ENCODE measurements at regions of chr7 and their contacts with region 1.

Region 1: DNA sequence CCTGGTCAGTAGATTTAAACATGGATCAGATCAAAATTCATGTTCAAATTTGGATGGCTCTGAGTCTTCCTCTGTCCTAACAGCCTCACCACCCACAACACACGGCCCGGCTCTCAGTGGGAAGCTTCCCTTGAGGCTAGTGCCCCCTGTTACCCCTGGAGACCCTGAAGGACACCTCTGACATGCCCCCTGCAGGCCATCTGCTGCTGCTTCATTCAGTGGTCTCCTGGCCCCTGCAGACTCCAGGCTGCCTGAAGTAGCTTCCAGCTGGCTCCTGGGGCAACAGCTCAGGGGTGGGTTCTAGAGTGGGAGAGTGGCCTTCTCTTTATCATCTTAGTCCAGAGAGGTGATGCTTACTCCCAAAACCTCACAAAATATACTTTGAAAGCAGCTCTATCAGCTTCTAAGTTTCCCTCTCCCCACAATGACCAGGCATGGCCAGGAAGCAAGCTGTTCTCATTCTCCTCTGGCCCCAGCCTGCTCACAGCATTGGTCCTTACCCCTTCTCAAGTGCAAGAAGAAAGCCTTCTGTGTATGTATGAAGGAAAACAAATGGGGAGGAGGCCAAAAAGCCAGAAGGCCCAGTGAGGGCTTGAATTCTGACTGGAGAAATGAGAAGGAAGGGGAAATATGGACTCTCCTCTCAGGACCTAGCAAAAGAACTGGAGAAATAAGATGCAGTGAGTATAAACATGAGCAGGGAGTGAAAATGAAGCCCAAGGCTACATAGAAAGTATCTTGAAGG is 189.6 kb upstream of the INHBA start:
- DNase-seq: peak in 1 of 2 donors; percentile 11
- ATAC-seq: peak in 1 of 3 donors; percentile 35
- H3K4me3 ChIP-seq: no peak overlapping the region
- H3K4me3 Mint-ChIP-seq: no peak overlapping the region
- H3K27ac ChIP-seq: no peak overlapping the region
- H3K27ac Mint-ChIP-seq: no peak overlapping the region
- H3K4me1 ChIP-seq: no peaks in the 10 kb centered on the region
- H3K4me1 Mint-ChIP-seq: no peaks in the 10 kb centered on the region
- H3K27me3 ChIP-seq: no peaks in the 10 kb centered on the region
- H3K27me3 Mint-ChIP-seq: peaks cover 3 to 18% of the 10 kb centered on the region in 2 donors
- CTCF ChIP-seq: no peak

Region 2: DNA sequence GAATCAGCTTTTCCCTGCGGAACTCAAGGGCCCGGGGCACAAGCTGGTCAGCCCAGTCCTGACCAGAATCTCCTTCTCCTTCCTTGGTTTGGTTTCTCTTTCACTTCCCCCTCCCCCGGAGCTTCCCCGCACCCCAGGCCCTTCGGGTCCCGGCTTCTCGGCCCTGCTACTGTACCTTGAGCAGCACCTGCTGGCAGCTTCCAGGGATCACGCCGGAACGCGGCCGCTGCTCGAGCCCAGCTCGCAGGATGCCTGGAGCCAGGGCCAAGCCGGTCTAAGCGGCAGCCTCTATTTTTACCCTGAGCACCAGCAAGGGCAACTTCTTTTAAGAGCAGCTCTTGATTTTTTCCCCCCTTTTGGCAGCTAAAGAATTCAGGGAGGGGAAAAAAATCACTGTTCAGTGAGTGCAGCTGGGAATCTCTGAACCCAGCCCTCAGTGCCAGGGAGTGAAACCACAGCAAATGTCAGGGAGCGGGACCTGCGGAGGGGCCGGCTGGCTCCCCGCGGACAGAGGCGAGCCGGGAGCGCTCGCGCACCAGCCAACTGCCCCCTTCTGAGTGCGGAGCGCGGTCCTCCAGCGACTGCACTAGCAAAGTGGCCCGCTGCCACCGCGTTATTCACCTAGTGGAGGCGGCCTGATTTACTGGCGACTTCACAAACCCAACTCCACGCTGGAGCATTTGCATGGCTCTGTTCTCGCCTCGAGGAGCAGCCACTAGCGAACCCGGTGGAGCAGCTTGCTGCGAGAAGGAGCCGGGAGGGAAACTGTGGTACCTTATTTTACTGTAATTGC is 187.2 kb before region 1 on chr7:
- intact Hi-C with region 1: loop called (anchors 10 kb)
- DNase-seq: peak; percentile 49 to 53
- ATAC-seq: peak; percentile 88 to 92 (median 89)
- H3K4me3 ChIP-seq: peak overlapping the region; percentile 58
- H3K4me3 Mint-ChIP-seq: peak overlapping the region; percentile 93
- H3K27ac ChIP-seq: no peak overlapping the region
- H3K27ac Mint-ChIP-seq: peak overlapping the region in 1 of 2 donors; percentile 90
- H3K4me1 ChIP-seq: peaks cover 12% of the 10 kb centered on the region
- H3K4me1 Mint-ChIP-seq: peaks cover 14 to 21% of the 10 kb centered on the region in 2 donors
- H3K27me3 ChIP-seq: no peaks in the 10 kb centered on the region
- H3K27me3 Mint-ChIP-seq: peaks cover 22 to 43% of the 10 kb centered on the region in 2 donors
- CTCF ChIP-seq: peak; percentile 42

Region 3: GRCh38 chr7:41745451-41745850 is 147.1 kb before region 1 on chr7:
- intact Hi-C with region 1: no loop called
- DNase-seq: no peak
- ATAC-seq: no peak
- H3K4me3 ChIP-seq: no peak overlapping the region
- H3K4me3 Mint-ChIP-seq: no peak overlapping the region
- H3K27ac ChIP-seq: no peak overlapping the region
- H3K27ac Mint-ChIP-seq: no peak overlapping the region
- H3K4me1 ChIP-seq: no peaks in the 10 kb centered on the region
- H3K4me1 Mint-ChIP-seq: no peaks in the 10 kb centered on the region
- H3K27me3 ChIP-seq: no peaks in the 10 kb centered on the region
- H3K27me3 Mint-ChIP-seq: peaks cover 3 to 10% of the 10 kb centered on the region in 2 donors
- CTCF ChIP-seq: no peak

Region 4: GRCh38 chr7:43394441-43395130 is 1502.1 kb after region 1 on chr7:
- intact Hi-C with region 1: no loop called
- DNase-seq: no peak
- ATAC-seq: no peak
- H3K4me3 ChIP-seq: no peak overlapping the region
- H3K4me3 Mint-ChIP-seq: no peak overlapping the region
- H3K27ac ChIP-seq: no peak overlapping the region
- H3K27ac Mint-ChIP-seq: no peak overlapping the region
- H3K4me1 ChIP-seq: no peaks in the 10 kb centered on the region
- H3K4me1 Mint-ChIP-seq: no peaks in the 10 kb centered on the region
- H3K27me3 ChIP-seq: no peaks in the 10 kb centered on the region
- H3K27me3 Mint-ChIP-seq: peaks cover 24 to 27% of the 10 kb centered on the region in 2 donors
- CTCF ChIP-seq: no peak

Measured in natural killer cell (primary cell).